ENCODE measurements at regions of chr1 and their contacts with region 1.

Region 1: DNA sequence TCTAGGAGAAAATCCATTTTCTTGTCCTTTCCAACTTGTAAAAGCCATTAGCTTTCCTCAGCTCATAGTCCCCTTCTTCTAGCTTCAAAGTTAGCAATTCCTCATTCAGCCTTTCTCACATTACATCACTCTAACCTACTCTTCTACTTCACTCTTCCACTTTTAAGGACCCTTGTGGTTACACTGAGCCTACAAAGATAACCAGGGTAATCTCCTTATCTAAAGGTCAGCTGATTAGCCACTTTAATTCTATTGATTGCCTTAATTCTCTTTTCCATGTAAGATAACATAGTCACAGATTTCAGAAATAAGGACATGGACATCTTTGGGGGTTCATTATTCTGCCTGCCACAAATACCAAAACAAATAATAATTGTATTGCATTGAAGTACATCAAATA is 8.5 kb upstream of the SPATA6 start:
- DNase-seq: no peak

Region 2: GRCh38 chr1:47755101-47755990 is 725.2 kb before region 1 on chr1:
- intact Hi-C with region 1: loop called in 1 of 2 experiments (anchors 5 kb)
- DNase-seq: peak; percentile 67